Spleen (tissue), 13 donors: ENCODE measurements at regions of chr2 and their contacts with region 1.

Region 1: GRCh38 chr2:98445648-98446581 is 1.3 kb downstream of the INPP4A start:
- DNase-seq: no peak
- H3K4me3 ChIP-seq: peak overlapping the region; percentile 67 to 81 (median 72)
- H3K27ac ChIP-seq: peak overlapping the region; percentile 70 to 93 (median 86)
- H3K4me1 ChIP-seq: peaks cover 0 to 65% (median 43%) of the 10 kb centered on the region in 6 donors
- H3K27me3 ChIP-seq: no peaks in the 10 kb centered on the region
- CTCF ChIP-seq: peak in 2 of 11 experiments; percentile 6 to 12
- POLR2A ChIP-seq: no peak

Region 2: DNA sequence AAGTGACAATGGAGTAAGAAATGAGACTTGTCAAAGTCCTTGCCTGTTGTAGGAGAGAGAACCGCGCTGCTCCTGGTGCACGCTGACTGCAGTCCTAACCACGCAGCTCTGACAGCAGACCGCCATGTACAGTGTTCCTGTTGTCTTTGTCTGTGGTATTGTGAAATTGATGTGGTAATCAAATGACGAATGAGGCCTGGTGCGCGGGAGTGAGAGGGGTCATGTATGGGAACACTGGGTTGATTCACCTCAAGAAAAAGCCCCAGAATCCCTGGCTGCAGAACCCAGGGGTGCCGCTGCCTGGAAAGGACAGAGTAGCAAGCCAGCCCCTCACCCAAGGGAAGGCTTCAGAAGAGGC is 62.8 kb after region 1 on chr2:
- intact Hi-C with region 1: loop called (anchors 2 kb)
- DNase-seq: peak; percentile 86
- H3K4me3 ChIP-seq: peak overlapping the region in 1 of 8 donors; percentile 46
- H3K27ac ChIP-seq: peak overlapping the region; percentile 46 to 95 (median 86)
- H3K4me1 ChIP-seq: peaks cover 21 to 100% (median 73%) of the 10 kb centered on the region in 6 donors
- H3K27me3 ChIP-seq: no peaks in the 10 kb centered on the region
- CTCF ChIP-seq: peak in 2 of 11 experiments; percentile 8 to 25
- POLR2A ChIP-seq: no peak

Region 3: DNA sequence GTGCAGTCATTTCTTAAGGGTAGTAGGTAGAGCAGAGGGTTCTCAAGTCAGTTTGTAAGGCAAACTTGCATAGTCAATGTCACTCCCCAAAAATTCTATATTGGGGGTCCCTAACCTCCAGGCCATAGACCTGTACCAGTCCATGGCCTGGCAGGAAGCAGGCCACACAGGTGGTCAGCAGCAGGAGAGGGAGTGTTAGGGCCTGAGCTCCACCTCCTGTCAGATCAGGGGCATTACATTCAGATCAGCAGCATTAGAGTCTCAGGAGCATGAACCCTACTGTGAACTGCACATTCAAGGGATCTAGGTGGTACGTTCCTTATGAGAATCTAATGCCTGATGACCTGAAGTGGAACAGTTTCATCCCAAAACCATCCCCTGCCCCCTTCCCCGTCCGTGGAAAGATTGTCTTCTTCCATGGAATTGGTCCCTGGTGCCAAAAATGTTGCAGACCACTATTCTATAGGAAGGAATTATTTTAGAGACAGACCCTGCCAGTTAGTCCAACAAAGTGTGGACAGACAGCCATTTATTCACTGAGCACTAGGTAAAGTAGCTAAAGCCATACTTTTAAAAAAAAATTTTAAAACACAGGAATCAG is 155.7 kb after region 1 on chr2:
- intact Hi-C with region 1: no loop called
- DNase-seq: no peak
- H3K4me3 ChIP-seq: no peak overlapping the region
- H3K27ac ChIP-seq: no peak overlapping the region
- H3K4me1 ChIP-seq: peaks cover 8 to 25% (median 19%) of the 10 kb centered on the region in 6 donors
- H3K27me3 ChIP-seq: no peaks in the 10 kb centered on the region
- CTCF ChIP-seq: peak in 7 of 11 experiments; percentile 35 to 50 (median 42)
- POLR2A ChIP-seq: no peak